Mammary epithelial cell (primary cell): ENCODE measurements at regions of chr1 and their contacts with region 1.

Region 1: GRCh38 chr1:247373721-247374141 is 42.1 kb upstream of the ZNF496 start:
- DNase-seq: peak; percentile 22
- H3K4me3 ChIP-seq: peak overlapping the region; percentile 40 to 42 (median 42)
- H3K27ac ChIP-seq: no peak overlapping the region
- H3K4me1 ChIP-seq: no peaks in the 10 kb centered on the region
- H3K27me3 ChIP-seq: no peaks in the 10 kb centered on the region
- CTCF ChIP-seq: peak; percentile 46 to 56

Region 2: DNA sequence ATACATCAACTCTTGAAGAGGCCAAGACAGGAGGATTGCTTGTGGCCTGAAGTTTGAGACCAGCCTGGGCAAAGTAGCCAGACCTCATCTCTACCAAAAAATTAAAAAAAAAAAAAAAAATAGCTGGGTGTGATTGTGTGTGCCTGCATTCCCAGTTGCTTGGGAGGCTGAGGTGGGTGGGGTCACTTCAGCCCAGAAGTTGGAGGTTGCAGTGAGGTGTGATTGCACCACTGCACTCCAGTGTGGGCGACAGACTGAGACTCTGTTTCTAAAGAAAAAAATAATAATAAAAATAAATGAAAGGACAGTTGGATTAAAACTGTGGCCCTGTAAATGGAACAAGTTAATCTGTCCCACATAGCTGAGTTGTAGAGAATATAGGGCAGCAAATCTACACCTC is 23.1 kb before region 1 on chr1:
- CTCF ChIA-PET with region 1: interaction called, 21 read pairs
- dilution Hi-C with region 1: no loop called
- in situ Hi-C with region 1: no loop called
- intact Hi-C with region 1: no loop called
- DNase-seq: no peak
- H3K4me3 ChIP-seq: no peak overlapping the region
- H3K27ac ChIP-seq: no peak overlapping the region
- H3K4me1 ChIP-seq: no peaks in the 10 kb centered on the region
- H3K27me3 ChIP-seq: no peaks in the 10 kb centered on the region
- CTCF ChIP-seq: no peak

Region 3: GRCh38 chr1:247440001-247440620 is 66.4 kb after region 1 on chr1:
- CTCF ChIA-PET with region 1: no interaction called
- dilution Hi-C with region 1: no loop called
- in situ Hi-C with region 1: no loop called
- intact Hi-C with region 1: no loop called
- DNase-seq: no peak
- H3K4me3 ChIP-seq: no peak overlapping the region
- H3K27ac ChIP-seq: no peak overlapping the region
- H3K4me1 ChIP-seq: no peaks in the 10 kb centered on the region
- H3K27me3 ChIP-seq: no peaks in the 10 kb centered on the region
- CTCF ChIP-seq: no peak

Region 4: DNA sequence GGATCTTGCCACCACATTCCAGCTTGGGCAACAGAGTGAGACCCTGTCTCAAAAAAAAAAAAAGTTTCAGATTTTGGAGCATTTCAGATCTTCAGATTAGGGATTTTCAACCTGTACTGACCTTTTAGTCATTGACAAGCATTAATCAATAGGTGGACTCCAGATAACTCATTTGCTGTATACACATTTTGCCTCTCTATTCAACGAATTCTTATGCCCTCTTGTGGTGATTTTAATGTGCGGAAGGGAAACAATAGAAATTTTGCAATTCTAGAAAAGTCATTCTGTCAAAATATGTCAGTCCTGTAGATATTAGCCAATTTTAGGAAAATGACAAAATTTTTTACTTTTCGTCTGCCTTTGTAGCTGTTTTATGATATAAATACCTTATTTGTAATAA is 202.8 kb after region 1 on chr1:
- CTCF ChIA-PET with region 1: no interaction called
- dilution Hi-C with region 1: no loop called
- in situ Hi-C with region 1: no loop called
- intact Hi-C with region 1: loop called (anchors 5 kb)
- DNase-seq: peak; percentile 7
- H3K4me3 ChIP-seq: no peak overlapping the region
- H3K27ac ChIP-seq: no peak overlapping the region
- H3K4me1 ChIP-seq: no peaks in the 10 kb centered on the region
- H3K27me3 ChIP-seq: no peaks in the 10 kb centered on the region
- CTCF ChIP-seq: peak in 1 of 2 donors; percentile 35